GM18951 (cell line): ENCODE measurements at regions of chr18 and their contacts with region 1.

Region 1: GRCh38 chr18:59823596-59824195 is 76.1 kb upstream of the PMAIP1 start:
- POLR2A ChIP-seq: no peak

Region 2: DNA sequence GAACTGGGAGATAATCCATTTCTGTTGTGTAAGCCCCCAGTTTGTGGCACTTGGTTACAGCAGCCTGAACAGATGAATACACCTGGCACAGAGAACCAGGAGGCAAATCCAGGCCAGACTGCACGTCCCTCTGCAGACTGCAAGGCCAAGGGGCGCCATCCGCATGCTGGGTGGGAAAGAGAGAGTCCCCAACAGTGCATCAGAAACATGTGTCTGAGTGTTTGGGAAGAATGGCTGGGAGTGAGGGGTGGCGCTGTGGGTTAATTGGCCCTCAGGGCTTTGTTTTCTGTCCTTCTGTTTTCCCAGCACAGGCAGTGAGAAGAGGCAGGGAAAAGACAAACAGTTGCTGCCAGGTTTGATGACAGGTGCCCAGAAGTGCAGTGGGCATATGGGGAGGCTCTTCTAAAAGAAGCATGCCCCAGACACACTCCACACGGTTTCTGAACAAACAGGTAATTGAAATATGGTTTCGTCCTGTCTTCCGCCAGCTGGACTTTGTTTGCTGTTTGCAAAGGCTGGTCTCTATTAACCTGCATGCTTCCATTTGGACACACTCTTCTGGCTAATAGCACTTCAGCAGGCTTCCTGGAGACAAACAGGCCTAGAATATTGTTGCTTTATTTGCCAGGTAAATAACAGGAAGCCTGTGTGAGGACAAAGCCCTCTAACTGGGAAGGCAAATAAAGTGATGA is 727.5 kb before region 1 on chr18:
- in situ Hi-C with region 1: no loop called
- POLR2A ChIP-seq: no peak

Region 3: GRCh38 chr18:59459369-59460079 is 364.2 kb before region 1 on chr18:
- in situ Hi-C with region 1: loop called (anchors 25 kb)
- POLR2A ChIP-seq: no peak

Region 4: DNA sequence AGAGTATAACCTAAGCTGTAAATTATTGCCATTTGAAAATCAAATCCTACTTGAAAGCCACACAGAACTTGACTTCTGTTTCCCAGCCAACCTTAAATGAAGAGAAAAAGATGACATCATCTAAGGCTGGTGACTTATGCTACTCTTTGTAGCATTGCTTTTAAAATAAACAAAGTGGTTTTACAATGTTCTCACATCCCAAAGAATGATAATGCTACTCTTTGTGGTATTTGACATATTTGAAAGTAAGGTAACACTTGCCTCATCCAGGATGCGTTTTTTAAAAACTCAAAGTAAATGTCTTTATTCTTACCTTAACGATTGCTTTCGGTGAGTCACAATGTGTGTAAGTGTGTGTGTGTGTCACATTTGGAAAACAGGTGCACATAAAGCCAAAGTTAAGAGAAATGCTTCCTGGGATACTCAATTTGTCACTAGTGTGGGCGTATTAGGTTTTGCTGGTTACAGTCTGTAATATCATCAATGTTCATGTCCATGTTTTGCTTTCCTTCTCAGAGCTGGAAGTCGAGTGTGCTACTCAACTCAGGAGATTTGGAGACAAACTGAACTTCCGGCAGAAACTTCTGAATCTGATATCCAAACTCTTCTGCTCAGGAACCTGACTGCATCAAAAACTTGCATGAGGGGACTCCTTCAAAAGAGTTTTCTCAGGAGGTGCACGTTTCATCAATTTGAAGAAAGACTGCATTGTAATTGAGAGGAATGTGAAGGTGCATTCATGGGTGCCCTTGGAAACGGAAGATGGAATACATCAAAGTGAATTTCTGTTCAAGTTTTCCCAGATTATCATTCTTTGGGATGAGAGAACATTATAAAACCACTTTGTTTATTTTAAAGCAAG is 78.7 kb after region 1 on chr18:
- in situ Hi-C with region 1: no loop called
- POLR2A ChIP-seq: no peak

Region 5: GRCh38 chr18:60391571-60392226 is 568.0 kb after region 1 on chr18:
- in situ Hi-C with region 1: no loop called
- POLR2A ChIP-seq: no peak